Naive thymus-derived CD4-positive, alpha-beta T cell (primary cell): ENCODE measurements at regions of chr4 and their contacts with region 1.

Region 1: GRCh38 chr4:140523857-140524742 is at the start of gene ELMOD2:
- DNase-seq: peak; percentile 95 to 98 (median 97)
- ATAC-seq: peak; percentile 100
- H3K4me3 ChIP-seq: peak within 1 kb of the TSS; percentile 70
- H3K4me3 Mint-ChIP-seq: peak within 1 kb of the TSS; percentile 78 to 95 (median 88)
- H3K27ac ChIP-seq: peak within 1 kb of the TSS; percentile 71
- H3K27ac Mint-ChIP-seq: peak within 1 kb of the TSS; percentile 78 to 93 (median 86)
- H3K4me1 ChIP-seq: peaks cover 12 to 18% of the 10 kb centered on the region in 2 donors
- H3K4me1 Mint-ChIP-seq: peaks cover 8 to 39% (median 29%) of the 10 kb centered on the region in 7 donors
- H3K27me3 ChIP-seq: no peaks in the 10 kb centered on the region
- H3K27me3 Mint-ChIP-seq: peaks cover 0 to 3% (median 0%) of the 10 kb centered on the region in 5 donors
- total RNA-seq, gene ELMOD2: 12.8 to 29.2 (median 17.7) TPM

Region 2: GRCh38 chr4:139015269-139015947 is 1508.7 kb before region 1 on chr4 and contains the start of gene NOCT:
- CTCF ChIA-PET with region 1: no interaction called
- POLR2A ChIA-PET with region 1: no interaction called
- intact Hi-C with region 1: loop called (anchors 1 to 5 kb)
- DNase-seq: peak; percentile 82 to 92 (median 89)
- ATAC-seq: peak; percentile 94
- H3K4me3 ChIP-seq: peak within 1 kb of the TSS; percentile 65
- H3K4me3 Mint-ChIP-seq: peak within 1 kb of the TSS; percentile 82 to 93 (median 88)
- H3K27ac ChIP-seq: peak within 1 kb of the TSS; percentile 91
- H3K27ac Mint-ChIP-seq: peak within 1 kb of the TSS; percentile 76 to 99 (median 94)
- H3K4me1 ChIP-seq: peaks cover 7 to 10% of the 10 kb centered on the region in 2 donors
- H3K4me1 Mint-ChIP-seq: peaks cover 14 to 44% (median 24%) of the 10 kb centered on the region in 7 donors
- H3K27me3 ChIP-seq: no peaks in the 10 kb centered on the region
- H3K27me3 Mint-ChIP-seq: no peaks in the 10 kb centered on the region
- total RNA-seq, gene NOCT: 1.6 to 33.7 (median 8.8) TPM

Region 3: GRCh38 chr4:139301113-139301820 is 1222.8 kb before region 1 on chr4 and contains the start of gene NAA15:
- CTCF ChIA-PET with region 1: no interaction called
- POLR2A ChIA-PET with region 1: interaction called, 5 read pairs
- intact Hi-C with region 1: loop called (anchors 1 to 5 kb)
- DNase-seq: peak; percentile 88 to 99 (median 97)
- ATAC-seq: peak; percentile 95
- H3K4me3 ChIP-seq: peak within 1 kb of the TSS; percentile 83
- H3K4me3 Mint-ChIP-seq: peak within 1 kb of the TSS; percentile 96 to 100 (median 100)
- H3K27ac ChIP-seq: peak within 1 kb of the TSS; percentile 92
- H3K27ac Mint-ChIP-seq: peak within 1 kb of the TSS; percentile 97 to 100 (median 99)
- H3K4me1 ChIP-seq: peaks cover 22 to 28% of the 10 kb centered on the region in 2 donors
- H3K4me1 Mint-ChIP-seq: peaks cover 17 to 76% (median 58%) of the 10 kb centered on the region in 7 donors
- H3K27me3 ChIP-seq: no peaks in the 10 kb centered on the region
- H3K27me3 Mint-ChIP-seq: no peaks in the 10 kb centered on the region
- total RNA-seq, gene NAA15: 41.2 to 67.4 (median 49.0) TPM

Region 4: GRCh38 chr4:140012688-140013486 is 511.2 kb before region 1 on chr4:
- CTCF ChIA-PET with region 1: no interaction called
- POLR2A ChIA-PET with region 1: no interaction called
- intact Hi-C with region 1: loop called in 1 of 2 experiments (anchors 10 kb)
- DNase-seq: peak; percentile 7 to 77 (median 66)
- ATAC-seq: peak; percentile 94
- H3K4me3 ChIP-seq: no peak overlapping the region
- H3K4me3 Mint-ChIP-seq: peak overlapping the region in 1 of 10 donors; percentile 1
- H3K27ac ChIP-seq: no peak overlapping the region
- H3K27ac Mint-ChIP-seq: peak overlapping the region in 1 of 9 donors; percentile 11
- H3K4me1 ChIP-seq: no peaks in the 10 kb centered on the region
- H3K4me1 Mint-ChIP-seq: peaks cover 5 to 9% (median 8%) of the 10 kb centered on the region in 7 donors
- H3K27me3 ChIP-seq: no peaks in the 10 kb centered on the region
- H3K27me3 Mint-ChIP-seq: peaks cover 0 to 39% (median 0%) of the 10 kb centered on the region in 5 donors

Region 5: GRCh38 chr4:140373328-140374129 is 150.6 kb before region 1 on chr4 and contains the start of gene SCOC:
- CTCF ChIA-PET with region 1: interaction called, 3 read pairs
- POLR2A ChIA-PET with region 1: interaction called, 8 read pairs
- intact Hi-C with region 1: loop called (anchors 1 kb)
- DNase-seq: peak; percentile 80 to 98 (median 95)
- ATAC-seq: peak; percentile 98
- H3K4me3 ChIP-seq: peak within 1 kb of the TSS; percentile 79
- H3K4me3 Mint-ChIP-seq: peak within 1 kb of the TSS in 2 of 10 donors; percentile 87 to 90
- H3K27ac ChIP-seq: peak within 1 kb of the TSS; percentile 86
- H3K27ac Mint-ChIP-seq: peak within 1 kb of the TSS in 5 of 9 donors; percentile 47 to 90 (median 51)
- H3K4me1 ChIP-seq: peaks cover 6 to 7% of the 10 kb centered on the region in 2 donors
- H3K4me1 Mint-ChIP-seq: peaks cover 29 to 49% (median 43%) of the 10 kb centered on the region in 7 donors
- H3K27me3 ChIP-seq: no peaks in the 10 kb centered on the region
- H3K27me3 Mint-ChIP-seq: peaks cover 0 to 17% (median 0%) of the 10 kb centered on the region in 5 donors
- total RNA-seq, gene SCOC: 9.3 to 26.3 (median 22.6) TPM

Region 6: DNA sequence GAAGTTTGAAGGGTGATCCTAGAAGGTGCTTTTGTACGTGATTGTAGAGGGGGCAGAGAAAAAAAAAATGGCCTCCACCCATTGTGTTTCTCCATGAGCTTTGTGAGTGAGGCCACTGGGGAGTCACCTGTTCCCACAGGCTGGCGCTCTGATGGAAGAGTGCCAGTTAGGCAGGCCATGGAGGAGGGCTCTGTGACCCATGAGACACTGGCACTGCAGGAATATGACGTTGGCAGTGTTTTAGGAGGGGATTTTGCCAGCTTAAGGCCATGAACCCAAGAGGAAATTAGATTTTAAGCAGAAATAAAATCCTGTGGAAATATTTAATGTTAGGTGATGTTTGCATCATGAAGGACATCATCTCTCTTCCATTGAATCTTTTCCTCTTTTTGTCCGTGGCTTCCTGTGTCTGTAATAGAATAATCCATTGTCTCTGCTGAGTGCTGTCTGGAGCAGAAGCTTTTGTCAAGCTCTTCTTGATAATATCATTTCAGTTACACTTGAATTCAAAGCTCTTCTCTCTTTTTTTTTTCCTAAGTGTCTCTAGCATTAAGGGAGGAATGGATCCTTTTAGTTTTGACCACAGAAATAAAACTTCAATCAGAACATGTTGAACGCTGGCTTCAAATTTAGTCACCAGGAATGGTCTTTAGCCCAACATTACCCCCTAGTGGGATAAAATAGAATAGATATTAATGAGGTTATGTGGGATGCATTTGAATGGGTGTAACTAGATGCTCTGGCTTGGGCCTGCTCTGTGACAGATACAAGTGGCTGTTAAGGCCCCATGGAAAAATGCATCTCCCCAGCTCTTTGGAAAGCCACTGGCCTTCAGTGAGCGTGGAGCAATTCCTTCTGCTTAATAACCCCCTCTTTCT is 85.7 kb after region 1 on chr4:
- CTCF ChIA-PET with region 1: no interaction called
- POLR2A ChIA-PET with region 1: no interaction called
- intact Hi-C with region 1: loop called (anchors 1 kb)
- DNase-seq: peak in 5 of 9 donors; percentile 21 to 49 (median 25)
- ATAC-seq: peak; percentile 73
- H3K4me3 ChIP-seq: no peak overlapping the region
- H3K4me3 Mint-ChIP-seq: no peak overlapping the region
- H3K27ac ChIP-seq: no peak overlapping the region
- H3K27ac Mint-ChIP-seq: no peak overlapping the region
- H3K4me1 ChIP-seq: no peaks in the 10 kb centered on the region
- H3K4me1 Mint-ChIP-seq: peaks cover 0 to 2% (median 0%) of the 10 kb centered on the region in 7 donors
- H3K27me3 ChIP-seq: no peaks in the 10 kb centered on the region
- H3K27me3 Mint-ChIP-seq: peaks cover 0 to 7% (median 0%) of the 10 kb centered on the region in 5 donors

Region 7: GRCh38 chr4:141220655-141221605 is 696.8 kb after region 1 on chr4 and contains the start of gene ZNF330:
- CTCF ChIA-PET with region 1: no interaction called
- POLR2A ChIA-PET with region 1: no interaction called
- intact Hi-C with region 1: loop called (anchors 1 kb)
- DNase-seq: peak; percentile 80 to 97 (median 90)
- ATAC-seq: peak; percentile 97
- H3K4me3 ChIP-seq: peak within 1 kb of the TSS; percentile 94
- H3K4me3 Mint-ChIP-seq: peak within 1 kb of the TSS; percentile 91 to 99 (median 94)
- H3K27ac ChIP-seq: peak within 1 kb of the TSS; percentile 93
- H3K27ac Mint-ChIP-seq: peak within 1 kb of the TSS; percentile 91 to 97 (median 96)
- H3K4me1 ChIP-seq: peaks cover 9 to 13% of the 10 kb centered on the region in 2 donors
- H3K4me1 Mint-ChIP-seq: peaks cover 24 to 58% (median 52%) of the 10 kb centered on the region in 7 donors
- H3K27me3 ChIP-seq: no peaks in the 10 kb centered on the region
- H3K27me3 Mint-ChIP-seq: peaks cover 0 to 18% (median 6%) of the 10 kb centered on the region in 5 donors
- total RNA-seq, gene ZNF330: 31.7 to 44.7 (median 41.0) TPM